MCF 10A (cell line): ENCODE measurements at regions of chr6 and their contacts with region 1.

Region 1: GRCh38 chr6:31827286-31828079 is at the start of gene HSPA1B:
- DNase-seq: peak; percentile 100
- H3K4me3 Mint-ChIP-seq: peak within 1 kb of the TSS; percentile 78
- H3K27ac Mint-ChIP-seq: peak within 1 kb of the TSS; percentile 99
- H3K4me1 Mint-ChIP-seq: peaks cover 13% of the 10 kb centered on the region
- H3K27me3 Mint-ChIP-seq: no peaks in the 10 kb centered on the region
- CTCF ChIP-seq: no peak
- total RNA-seq, gene HSPA1B: 29.8 and 51.6 TPM in 2 replicates

Region 2: DNA sequence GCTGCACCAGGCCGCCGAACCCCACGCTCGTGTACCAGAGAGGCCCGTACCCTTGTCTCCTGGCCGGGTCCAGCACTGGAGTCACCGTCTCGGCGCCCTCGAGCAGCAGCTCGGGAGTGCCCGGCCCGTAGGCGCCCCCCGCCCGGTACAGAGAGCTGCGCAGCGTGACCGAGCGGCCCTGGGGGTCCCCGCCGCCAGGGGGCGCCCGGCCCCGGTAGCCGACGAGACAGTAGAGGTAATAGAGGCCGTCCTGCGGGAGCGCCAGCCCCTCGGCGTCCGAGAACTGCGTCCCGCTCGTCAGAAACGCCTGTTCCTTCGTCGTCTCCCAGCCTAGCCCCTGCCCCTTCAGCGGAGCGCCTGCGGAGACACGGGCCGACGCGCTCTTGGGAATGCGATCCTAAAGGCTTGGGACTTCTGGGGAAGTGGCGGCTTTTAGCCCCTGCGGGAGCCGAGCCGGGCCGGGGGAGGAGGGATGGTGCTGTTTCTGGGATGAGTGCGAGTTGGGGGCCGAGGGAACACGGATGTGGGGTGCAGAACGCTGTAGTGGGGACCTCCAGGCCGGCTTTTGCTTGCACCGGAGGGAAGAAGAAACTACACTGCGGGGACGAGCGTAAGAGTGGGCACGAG is 246.6 kb before region 1 on chr6:
- CTCF ChIA-PET with region 1: no interaction called
- POLR2A ChIA-PET with region 1: no interaction called
- intact Hi-C with region 1: no loop called
- DNase-seq: peak; percentile 61
- H3K4me3 Mint-ChIP-seq: peak overlapping the region; percentile 96
- H3K27ac Mint-ChIP-seq: peak overlapping the region; percentile 66
- H3K4me1 Mint-ChIP-seq: peaks cover 10% of the 10 kb centered on the region
- H3K27me3 Mint-ChIP-seq: no peaks in the 10 kb centered on the region
- CTCF ChIP-seq: peak; percentile 87

Region 3: DNA sequence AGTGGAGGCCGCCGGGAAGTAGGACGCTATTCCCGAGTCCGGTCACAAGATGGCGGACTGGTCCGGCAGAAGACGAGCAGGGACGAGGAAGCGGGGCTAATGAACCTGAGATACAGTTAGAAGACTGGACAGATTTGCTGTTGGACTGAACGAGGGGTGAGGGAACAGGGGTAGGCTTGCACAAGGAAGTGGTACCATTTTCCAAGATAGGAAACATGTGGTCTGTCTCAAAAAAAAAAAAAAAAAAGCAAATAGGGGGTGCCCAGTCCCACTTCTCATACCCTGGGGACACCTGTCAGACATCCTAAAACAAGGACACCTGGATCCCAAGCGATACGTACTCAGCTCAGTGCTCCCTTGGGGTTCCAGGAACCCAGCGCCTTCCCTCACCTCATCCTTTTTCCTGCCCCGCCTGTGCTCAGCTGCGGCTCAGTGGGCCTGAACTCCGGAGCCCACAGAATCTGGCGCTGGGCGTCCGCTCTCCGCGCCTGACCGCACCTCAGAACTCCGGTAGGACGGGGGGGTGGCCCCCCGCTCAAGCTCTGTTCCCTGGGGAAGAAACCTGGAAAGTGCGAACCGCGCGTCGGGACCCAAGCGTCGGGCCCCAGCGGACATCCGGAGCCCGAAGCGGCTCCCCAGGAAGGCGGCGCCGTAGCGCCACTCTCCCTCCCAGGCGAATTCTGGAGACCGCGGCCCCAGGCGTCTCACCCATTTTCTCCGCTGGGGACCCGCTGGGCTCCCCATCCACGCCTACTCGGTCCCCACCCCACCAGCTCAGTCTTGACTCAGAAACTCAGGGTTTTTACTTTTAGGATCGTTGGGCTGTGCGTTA is 146.4 kb before region 1 on chr6 and contains the start of gene LY6G5C:
- CTCF ChIA-PET with region 1: interaction called, 3 read pairs
- POLR2A ChIA-PET with region 1: interaction called, 6 read pairs
- intact Hi-C with region 1: loop called (anchors 1 kb)
- DNase-seq: peak; percentile 81
- H3K4me3 Mint-ChIP-seq: peak within 1 kb of the TSS; percentile 73
- H3K27ac Mint-ChIP-seq: peak within 1 kb of the TSS; percentile 87
- H3K4me1 Mint-ChIP-seq: peaks cover 12% of the 10 kb centered on the region
- H3K27me3 Mint-ChIP-seq: peaks cover 18% of the 10 kb centered on the region
- CTCF ChIP-seq: peak; percentile 84
- total RNA-seq, gene LY6G5C: 0.64 and 1.4 TPM in 2 replicates

Region 4: GRCh38 chr6:31729515-31729978 is 97.9 kb before region 1 on chr6:
- CTCF ChIA-PET with region 1: interaction called, 4 read pairs
- POLR2A ChIA-PET with region 1: interaction called, 95 read pairs
- intact Hi-C with region 1: loop called (anchors 2 kb)
- DNase-seq: peak; percentile 88
- H3K4me3 Mint-ChIP-seq: peak overlapping the region; percentile 92
- H3K27ac Mint-ChIP-seq: peak overlapping the region; percentile 86
- H3K4me1 Mint-ChIP-seq: peaks cover 7% of the 10 kb centered on the region
- H3K27me3 Mint-ChIP-seq: no peaks in the 10 kb centered on the region
- CTCF ChIP-seq: no peak

Region 5: DNA sequence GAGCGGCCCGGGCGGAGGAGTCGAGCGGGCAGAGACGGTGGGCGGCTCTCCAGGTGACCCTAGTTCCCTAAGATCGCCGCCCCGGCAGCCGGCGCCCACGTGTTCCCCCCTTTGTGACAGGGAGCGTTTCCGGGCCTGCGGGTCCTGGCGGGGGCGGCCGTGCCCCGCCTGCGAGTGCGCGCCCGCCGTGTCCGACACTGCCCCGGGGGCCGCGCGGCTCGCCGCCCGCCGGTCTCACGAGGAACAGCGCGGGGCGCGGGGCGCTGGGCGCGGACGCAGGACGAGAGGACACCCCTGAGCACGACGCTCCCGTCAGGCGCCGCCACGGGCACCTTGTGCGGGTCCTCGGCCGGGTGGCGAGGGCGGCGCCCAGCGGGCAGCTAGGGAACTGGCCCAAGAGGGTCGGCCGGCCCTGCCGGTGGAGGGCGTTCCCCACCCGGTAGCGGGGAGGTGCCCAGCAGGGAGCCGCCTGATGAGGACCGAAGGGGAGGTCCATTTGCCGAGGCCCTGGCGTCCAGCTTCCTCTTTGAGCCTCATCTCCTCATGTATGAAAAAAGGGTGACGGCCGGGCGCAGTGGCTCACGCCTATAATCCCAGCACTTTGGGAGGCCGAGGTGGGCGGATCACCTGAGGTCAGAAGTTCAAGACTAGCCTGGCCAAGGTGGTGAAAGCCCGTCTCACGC is 31.7 kb before region 1 on chr6 and contains the start of gene VARS1:
- CTCF ChIA-PET with region 1: interaction called, 9 read pairs
- POLR2A ChIA-PET with region 1: interaction called, 77 read pairs
- intact Hi-C with region 1: loop called (anchors 2 kb)
- DNase-seq: peak; percentile 93
- H3K4me3 Mint-ChIP-seq: peak within 1 kb of the TSS; percentile 99
- H3K27ac Mint-ChIP-seq: peak within 1 kb of the TSS; percentile 98
- H3K4me1 Mint-ChIP-seq: peaks cover 27% of the 10 kb centered on the region
- H3K27me3 Mint-ChIP-seq: no peaks in the 10 kb centered on the region
- CTCF ChIP-seq: peak; percentile 69
- total RNA-seq, gene VARS1: 133 and 200 TPM in 2 replicates

Region 6: GRCh38 chr6:31815025-31815838 is 12.3 kb before region 1 on chr6 and contains the starts of genes HSPA1A and HSPA1L:
- CTCF ChIA-PET with region 1: interaction called, 8 read pairs
- POLR2A ChIA-PET with region 1: interaction called, 202 read pairs
- intact Hi-C with region 1: no loop called
- DNase-seq: peak; percentile 99
- H3K4me3 Mint-ChIP-seq: peak within 1 kb of the TSS; percentile 89
- H3K27ac Mint-ChIP-seq: peak within 1 kb of the TSS; percentile 97
- H3K4me1 Mint-ChIP-seq: peaks cover 11% of the 10 kb centered on the region
- H3K27me3 Mint-ChIP-seq: no peaks in the 10 kb centered on the region
- CTCF ChIP-seq: no peak
- total RNA-seq, gene HSPA1A: 20.3 and 34.0 TPM in 2 replicates
- total RNA-seq, gene HSPA1L: 0.35 and 0.79 TPM in 2 replicates